ENCODE measurements at regions of chr18 and their contacts with region 1.

Region 1: GRCh38 chr18:63339920-63340484 is 20.4 kb upstream of the BCL2 start:
- DNase-seq: peak in 7 of 9 donors; percentile 29 to 59 (median 51)
- ATAC-seq: peak; percentile 82
- H3K4me3 ChIP-seq: no peak overlapping the region
- H3K4me3 Mint-ChIP-seq: no peak overlapping the region
- H3K27ac ChIP-seq: no peak overlapping the region
- H3K27ac Mint-ChIP-seq: peak overlapping the region in 1 of 9 donors; percentile 29
- H3K4me1 ChIP-seq: no peaks in the 10 kb centered on the region
- H3K4me1 Mint-ChIP-seq: peaks cover 0 to 9% (median 5%) of the 10 kb centered on the region in 7 donors
- H3K27me3 ChIP-seq: no peaks in the 10 kb centered on the region
- H3K27me3 Mint-ChIP-seq: no peaks in the 10 kb centered on the region

Region 2: GRCh38 chr18:63131106-63131958 is 208.7 kb before region 1 on chr18:
- CTCF ChIA-PET with region 1: interaction called, 7 read pairs
- POLR2A ChIA-PET with region 1: no interaction called
- intact Hi-C with region 1: loop called in 1 of 2 experiments (anchors 1 kb)
- DNase-seq: peak in 7 of 9 donors; percentile 51 to 71 (median 69)
- ATAC-seq: peak; percentile 80
- H3K4me3 ChIP-seq: no peak overlapping the region
- H3K4me3 Mint-ChIP-seq: peak overlapping the region in 9 of 10 donors; percentile 13 to 81 (median 45)
- H3K27ac ChIP-seq: peak overlapping the region; percentile 61
- H3K27ac Mint-ChIP-seq: peak overlapping the region in 8 of 9 donors; percentile 36 to 94 (median 83)
- H3K4me1 ChIP-seq: peaks cover 9 to 18% of the 10 kb centered on the region in 2 donors
- H3K4me1 Mint-ChIP-seq: peaks cover 28 to 58% (median 50%) of the 10 kb centered on the region in 7 donors
- H3K27me3 ChIP-seq: no peaks in the 10 kb centered on the region
- H3K27me3 Mint-ChIP-seq: no peaks in the 10 kb centered on the region